Activated CD8-positive, alpha-beta memory T cell treated with anti-CD3 and anti-CD28 coated beads, Interleukin-2, amount 10 ng/mL, durations not matched to agents 7 days and 5 days (primary cell): ENCODE measurements at regions of chr17 and their contacts with region 1.

Region 1: DNA sequence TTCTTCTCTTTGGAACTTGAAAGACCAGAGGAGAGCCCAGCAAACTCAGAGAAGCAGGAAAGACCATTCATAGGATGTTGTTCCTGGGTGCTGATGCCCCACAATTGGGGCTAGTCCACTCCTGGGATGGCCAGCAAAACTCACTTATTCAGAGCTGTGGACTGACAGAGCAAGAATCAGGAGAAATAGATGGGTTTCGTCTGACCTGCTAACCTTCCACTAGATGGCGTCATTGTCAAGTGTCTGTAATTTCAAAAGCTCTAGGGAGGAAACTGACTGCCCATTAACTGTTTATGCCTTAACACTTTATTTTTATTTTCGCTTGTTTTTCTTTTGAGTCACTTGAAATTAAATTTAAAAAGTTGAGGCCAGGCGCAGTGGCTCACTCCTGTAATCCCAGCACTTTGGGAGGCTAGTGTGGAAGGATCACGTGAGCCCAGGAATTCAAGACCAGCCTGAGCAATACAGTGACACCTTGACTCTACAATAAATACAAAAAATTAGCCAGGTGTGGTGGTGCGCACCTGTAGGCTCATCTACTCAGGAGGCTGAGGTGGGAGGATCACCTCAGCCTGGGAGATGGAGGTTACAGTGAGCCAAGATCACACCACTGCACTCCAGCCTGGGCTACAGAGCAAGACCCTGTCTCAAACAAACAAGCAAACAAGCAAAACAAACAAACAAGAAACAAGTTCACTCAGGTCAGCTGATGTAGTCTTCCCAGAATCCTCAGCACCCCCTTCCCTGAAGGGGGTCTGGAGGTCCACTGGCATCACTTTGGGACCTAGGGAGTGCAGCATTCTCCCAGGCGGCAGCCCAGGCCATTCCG is 28.6 kb upstream of the MILR1 start:
- DNase-seq: peak; percentile 46
- ATAC-seq: peak; percentile 81
- H3K4me3 Mint-ChIP-seq: no peak overlapping the region
- H3K27ac Mint-ChIP-seq: no peak overlapping the region
- H3K4me1 Mint-ChIP-seq: peaks cover 9% of the 10 kb centered on the region
- H3K27me3 Mint-ChIP-seq: peaks cover 11% of the 10 kb centered on the region

Region 2: DNA sequence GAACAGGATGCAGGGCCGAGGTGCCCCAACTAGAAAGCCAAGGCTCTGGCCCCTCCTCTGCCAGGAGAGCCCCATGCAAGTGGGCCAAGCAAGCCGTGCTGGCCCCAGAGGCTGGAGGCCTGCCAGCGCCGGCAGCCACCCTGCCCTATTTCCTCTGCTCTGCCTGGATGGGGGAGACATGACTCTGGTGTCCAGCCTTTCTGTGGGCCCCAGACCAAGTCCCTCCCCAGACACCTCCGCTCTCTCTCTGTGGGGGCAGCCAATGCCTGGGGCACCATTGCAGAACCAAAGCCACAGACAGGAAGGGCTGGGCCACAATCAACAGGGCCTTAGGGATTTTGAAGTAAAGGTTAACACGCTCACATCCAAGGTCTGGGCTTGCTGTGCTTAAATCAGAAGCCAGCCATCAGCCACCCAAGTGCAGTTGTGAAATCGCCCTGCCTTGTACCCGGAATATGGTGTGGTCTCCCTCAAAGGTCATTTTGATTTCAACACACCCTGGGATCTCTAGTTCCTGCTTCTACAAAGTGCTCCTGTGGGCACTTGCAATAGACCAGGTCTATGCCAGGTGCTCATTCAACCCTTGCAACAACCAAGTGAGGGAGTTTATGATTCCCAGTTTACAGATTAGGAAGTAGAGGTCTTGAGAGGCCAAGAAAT is 93.8 kb before region 1 on chr17:
- CTCF ChIA-PET with region 1: interaction called, 362 read pairs
- DNase-seq: no peak
- ATAC-seq: peak; percentile 12
- H3K4me3 Mint-ChIP-seq: no peak overlapping the region
- H3K27ac Mint-ChIP-seq: peak overlapping the region; percentile 3
- H3K4me1 Mint-ChIP-seq: peaks cover 14% of the 10 kb centered on the region
- H3K27me3 Mint-ChIP-seq: no peaks in the 10 kb centered on the region

Region 3: GRCh38 chr17:64400642-64401041 is 19.7 kb before region 1 on chr17:
- CTCF ChIA-PET with region 1: interaction called, 20 read pairs
- DNase-seq: no peak
- ATAC-seq: no peak
- H3K4me3 Mint-ChIP-seq: no peak overlapping the region
- H3K27ac Mint-ChIP-seq: peak overlapping the region; percentile 73
- H3K4me1 Mint-ChIP-seq: peaks cover 54% of the 10 kb centered on the region
- H3K27me3 Mint-ChIP-seq: no peaks in the 10 kb centered on the region

Region 4: DNA sequence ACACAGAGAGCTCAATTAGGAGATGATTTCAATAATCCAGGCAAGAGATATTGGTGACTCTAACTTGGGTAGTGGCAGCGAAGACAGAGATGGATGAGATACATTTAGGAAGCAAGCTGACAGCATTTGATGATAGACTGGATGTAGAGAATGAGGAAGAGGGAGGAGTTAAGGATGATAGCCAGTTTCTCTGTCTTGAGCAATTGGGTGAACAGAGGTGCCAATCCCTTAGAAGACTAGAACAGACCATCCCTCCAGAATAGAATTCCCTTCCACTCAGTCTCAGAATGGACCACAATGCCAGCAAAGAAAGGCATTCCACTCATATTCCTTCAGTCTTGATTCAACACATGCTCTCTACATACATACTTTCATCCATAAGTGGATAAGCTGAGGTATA is 59.3 kb after region 1 on chr17:
- CTCF ChIA-PET with region 1: interaction called, 20 read pairs
- DNase-seq: no peak
- ATAC-seq: no peak
- H3K4me3 Mint-ChIP-seq: no peak overlapping the region
- H3K27ac Mint-ChIP-seq: no peak overlapping the region
- H3K4me1 Mint-ChIP-seq: peaks cover 8% of the 10 kb centered on the region
- H3K27me3 Mint-ChIP-seq: no peaks in the 10 kb centered on the region

Region 5: GRCh38 chr17:64506576-64507477 is 86.5 kb after region 1 on chr17 and contains the start of gene CEP95:
- CTCF ChIA-PET with region 1: interaction called, 15 read pairs
- DNase-seq: peak; percentile 98
- ATAC-seq: peak; percentile 72
- H3K4me3 Mint-ChIP-seq: peak within 1 kb of the TSS; percentile 100
- H3K27ac Mint-ChIP-seq: peak within 1 kb of the TSS; percentile 100
- H3K4me1 Mint-ChIP-seq: peaks cover 51% of the 10 kb centered on the region
- H3K27me3 Mint-ChIP-seq: peaks cover 2% of the 10 kb centered on the region
- total RNA-seq, gene CEP95: 45.7 to 52.6 TPM

Region 6: DNA sequence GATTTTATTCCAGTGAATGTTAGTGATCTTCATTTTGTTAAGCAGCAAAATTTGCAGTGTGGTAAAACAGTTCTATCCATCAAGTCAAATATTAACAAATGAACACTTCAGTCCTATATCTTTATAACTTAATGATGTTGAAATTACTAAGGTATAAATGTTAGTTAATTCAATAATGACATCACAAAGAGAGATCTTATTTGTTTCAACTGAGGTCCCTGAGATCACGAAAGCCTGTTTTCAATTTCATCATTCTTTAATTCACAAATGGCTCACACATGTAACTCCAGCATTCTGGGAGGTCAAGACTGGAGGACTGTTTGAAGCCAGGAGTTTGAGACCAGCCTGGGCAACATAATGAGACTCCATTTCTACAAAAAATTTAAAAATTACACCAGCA is 227.9 kb after region 1 on chr17:
- CTCF ChIA-PET with region 1: interaction called, 33 read pairs
- DNase-seq: no peak
- ATAC-seq: no peak
- H3K4me3 Mint-ChIP-seq: no peak overlapping the region
- H3K27ac Mint-ChIP-seq: no peak overlapping the region
- H3K4me1 Mint-ChIP-seq: peaks cover 45% of the 10 kb centered on the region
- H3K27me3 Mint-ChIP-seq: no peaks in the 10 kb centered on the region